A673 (cell line): ENCODE measurements at regions of chr15 and their contacts with region 1.

Region 1: GRCh38 chr15:80058851-80059785 is at the start of gene ZFAND6:
- DNase-seq: peak; percentile 97
- H3K4me3 ChIP-seq: peak within 1 kb of the TSS; percentile 73
- H3K27ac ChIP-seq: peak within 1 kb of the TSS; percentile 92
- H3K4me1 ChIP-seq: peaks cover 21% of the 10 kb centered on the region
- H3K27me3 ChIP-seq: no peaks in the 10 kb centered on the region
- CTCF ChIP-seq: no peak
- total RNA-seq, gene ZFAND6: 41.4 and 42.8 TPM in 2 replicates

Region 2: GRCh38 chr15:79923515-79924395 is 135.4 kb before region 1 on chr15:
- CTCF ChIA-PET with region 1: no interaction called
- POLR2A ChIA-PET with region 1: no interaction called
- intact Hi-C with region 1: loop called (anchors 10 kb)
- DNase-seq: peak; percentile 97
- H3K4me3 ChIP-seq: peak overlapping the region; percentile 92
- H3K27ac ChIP-seq: peak overlapping the region; percentile 78
- H3K4me1 ChIP-seq: no peaks in the 10 kb centered on the region
- H3K27me3 ChIP-seq: no peaks in the 10 kb centered on the region
- CTCF ChIP-seq: no peak

Region 3: GRCh38 chr15:80234883-80235282 is 175.8 kb after region 1 on chr15:
- CTCF ChIA-PET with region 1: no interaction called
- POLR2A ChIA-PET with region 1: no interaction called
- intact Hi-C with region 1: loop called (anchors 10 kb)
- DNase-seq: peak; percentile 35
- H3K4me3 ChIP-seq: no peak overlapping the region
- H3K27ac ChIP-seq: no peak overlapping the region
- H3K4me1 ChIP-seq: no peaks in the 10 kb centered on the region
- H3K27me3 ChIP-seq: peaks cover 42% of the 10 kb centered on the region
- CTCF ChIP-seq: peak; percentile 58

Region 4: GRCh38 chr15:80977627-80978036 is 918.5 kb after region 1 on chr15:
- CTCF ChIA-PET with region 1: no interaction called
- POLR2A ChIA-PET with region 1: no interaction called
- intact Hi-C with region 1: no loop called
- DNase-seq: peak; percentile 55
- H3K4me3 ChIP-seq: no peak overlapping the region
- H3K27ac ChIP-seq: no peak overlapping the region
- H3K4me1 ChIP-seq: peaks cover 10% of the 10 kb centered on the region
- H3K27me3 ChIP-seq: no peaks in the 10 kb centered on the region
- CTCF ChIP-seq: peak; percentile 57